ENCODE measurements at regions of chrX and their contacts with region 1.

Region 1: GRCh38 chrX:38166478-38167083 is 54.1 kb downstream of the SRPX start:
- ATAC-seq: peak in 1 of 8 experiments; percentile 37
- H3K4me3 ChIP-seq: no peak overlapping the region
- H3K27ac ChIP-seq: no peak overlapping the region
- H3K4me1 ChIP-seq: no peaks in the 10 kb centered on the region

Region 2: DNA sequence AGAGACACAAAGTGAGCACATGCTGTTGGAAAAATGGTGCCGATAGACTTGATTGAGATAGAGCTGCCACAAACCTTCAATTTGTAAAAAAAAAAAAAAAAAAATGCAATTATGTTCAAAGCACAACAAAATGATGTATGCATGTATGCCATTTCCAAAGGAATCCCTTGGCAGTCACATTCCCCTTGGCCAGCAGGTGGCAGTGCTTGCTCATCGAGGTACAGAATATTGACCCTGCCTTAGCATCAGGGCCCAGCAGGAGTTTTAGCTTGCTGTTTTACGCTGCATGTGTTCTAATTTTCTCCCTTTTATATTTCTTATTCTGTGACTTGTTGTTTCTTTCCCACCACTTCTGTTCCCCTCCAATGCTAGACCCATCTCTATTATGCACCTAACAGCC is 421.2 kb before region 1 on chrX:
- in situ Hi-C with region 1: loop called in 1 of 9 experiments (anchors 25 kb)
- ATAC-seq: peak; percentile 47 to 92 (median 68)
- H3K4me3 ChIP-seq: no peak overlapping the region
- H3K27ac ChIP-seq: no peak overlapping the region
- H3K4me1 ChIP-seq: no peaks in the 10 kb centered on the region

Region 3: GRCh38 chrX:37905436-37906147 is 261.0 kb before region 1 on chrX:
- in situ Hi-C with region 1: loop called in 2 of 9 experiments (anchors 25 kb)
- ATAC-seq: peak; percentile 50 to 98 (median 94)
- H3K4me3 ChIP-seq: peak overlapping the region; percentile 8 to 13 (median 8)
- H3K27ac ChIP-seq: no peak overlapping the region
- H3K4me1 ChIP-seq: no peaks in the 10 kb centered on the region

Region 4: GRCh38 chrX:37926700-37927099 is 239.9 kb before region 1 on chrX:
- in situ Hi-C with region 1: loop called in 3 of 9 experiments (anchors 25 kb)
- ATAC-seq: peak in 3 of 8 experiments; percentile 43 to 70 (median 57)
- H3K4me3 ChIP-seq: no peak overlapping the region
- H3K27ac ChIP-seq: no peak overlapping the region
- H3K4me1 ChIP-seq: no peaks in the 10 kb centered on the region

Region 5: GRCh38 chrX:37955273-37955672 is 211.3 kb before region 1 on chrX:
- in situ Hi-C with region 1: no loop called
- ATAC-seq: no peak
- H3K4me3 ChIP-seq: no peak overlapping the region
- H3K27ac ChIP-seq: no peak overlapping the region
- H3K4me1 ChIP-seq: no peaks in the 10 kb centered on the region

Measured in motor neuron (in vitro differentiated cells).